K562 (cell line): ENCODE measurements at regions of chr1 and their contacts with region 1.

Region 1: GRCh38 chr1:46724991-46725735 is 6.2 kb upstream of the EFCAB14 start:
- DNase-seq: peak; percentile 56 to 89 (median 66)
- ATAC-seq: peak; percentile 96
- H3K4me3 ChIP-seq: no peak overlapping the region
- H3K27ac ChIP-seq: no peak overlapping the region
- H3K4me1 ChIP-seq: peaks cover 8 to 15% of the 10 kb centered on the region in 2 experiments; a peak in 4 of 5 replicates
- H3K27me3 ChIP-seq: no peaks in the 10 kb centered on the region
- CTCF ChIP-seq: peak; percentile 93 to 96 (median 95)
- EP300 ChIP-seq: no peak
- POLR2A ChIP-seq: no peak
- RAD21 ChIP-seq: peak; percentile 94 to 98

Region 2: GRCh38 chr1:46527474-46528296 is 197.5 kb before region 1 on chr1:
- CTCF ChIA-PET with region 1: interaction called, 10 read pairs
- POLR2A ChIA-PET with region 1: no interaction called
- in situ Hi-C with region 1: no loop called
- intact Hi-C with region 1: no loop called
- DNase-seq: peak; percentile 87 to 94 (median 89)
- ATAC-seq: peak; percentile 87
- H3K4me3 ChIP-seq: no peak overlapping the region
- H3K27ac ChIP-seq: no peak overlapping the region; the same call in 2 of the 3 replicates
- H3K4me1 ChIP-seq: peaks cover 47 to 50% of the 10 kb centered on the region in 2 experiments
- H3K27me3 ChIP-seq: no peaks in the 10 kb centered on the region
- CTCF ChIP-seq: peak; percentile 98 to 99 (median 99)
- EP300 ChIP-seq: peak; percentile 50; the same call in 1 of the 2 replicates
- POLR2A ChIP-seq: no peak
- RAD21 ChIP-seq: peak; percentile 100

Region 3: GRCh38 chr1:46547481-46548383 is 177.4 kb before region 1 on chr1:
- CTCF ChIA-PET with region 1: no interaction called
- POLR2A ChIA-PET with region 1: no interaction called
- in situ Hi-C with region 1: loop called (anchors 5 kb)
- intact Hi-C with region 1: no loop called
- DNase-seq: peak; percentile 48 to 84 (median 52)
- ATAC-seq: peak; percentile 63
- H3K4me3 ChIP-seq: no peak overlapping the region
- H3K27ac ChIP-seq: no peak overlapping the region
- H3K4me1 ChIP-seq: peaks cover 33 to 60% of the 10 kb centered on the region in 2 experiments
- H3K27me3 ChIP-seq: peaks cover 12 to 26% of the 10 kb centered on the region in 2 experiments; a peak in 3 of 5 replicates
- CTCF ChIP-seq: peak; percentile 68 to 83 (median 83)
- EP300 ChIP-seq: no peak
- POLR2A ChIP-seq: no peak
- RAD21 ChIP-seq: peak; percentile 58 to 84

Region 4: GRCh38 chr1:46556822-46557221 is 168.3 kb before region 1 on chr1:
- CTCF ChIA-PET with region 1: interaction called, 4 read pairs
- POLR2A ChIA-PET with region 1: no interaction called
- in situ Hi-C with region 1: no loop called
- intact Hi-C with region 1: loop called (anchors 5 kb)
- DNase-seq: no peak
- ATAC-seq: peak; percentile 53
- H3K4me3 ChIP-seq: no peak overlapping the region
- H3K27ac ChIP-seq: no peak overlapping the region
- H3K4me1 ChIP-seq: peaks cover 6 to 13% of the 10 kb centered on the region in 2 experiments; a peak in 3 of 5 replicates
- H3K27me3 ChIP-seq: peaks cover 2 to 7% of the 10 kb centered on the region in 2 experiments; a peak in 3 of 5 replicates
- CTCF ChIP-seq: peak; percentile 5 to 51 (median 27); a peak in 3 of 6 replicates
- EP300 ChIP-seq: no peak
- POLR2A ChIP-seq: no peak
- RAD21 ChIP-seq: peak in 1 of 2 experiments; percentile 37; a peak in 2 of 4 replicates

Region 5: GRCh38 chr1:46616277-46617107 is 108.7 kb before region 1 on chr1 and contains the start of gene MOB3C:
- CTCF ChIA-PET with region 1: interaction called, 46 read pairs
- POLR2A ChIA-PET with region 1: interaction called, 3 read pairs
- in situ Hi-C with region 1: loop called (anchors 5 kb)
- intact Hi-C with region 1: no loop called
- DNase-seq: peak; percentile 77 to 89 (median 87)
- ATAC-seq: peak; percentile 86
- H3K4me3 ChIP-seq: peak within 1 kb of the TSS; percentile 72
- H3K27ac ChIP-seq: peak within 1 kb of the TSS; percentile 63
- H3K4me1 ChIP-seq: peaks cover 20 to 44% of the 10 kb centered on the region in 2 experiments
- H3K27me3 ChIP-seq: no peaks in the 10 kb centered on the region
- CTCF ChIP-seq: no peak
- EP300 ChIP-seq: no peak
- POLR2A ChIP-seq: peak; percentile 67
- RAD21 ChIP-seq: no peak
- polyA plus RNA-seq, gene MOB3C: 1.0 to 1.1 TPM

Region 6: GRCh38 chr1:46622344-46622743 is 102.8 kb before region 1 on chr1:
- CTCF ChIA-PET with region 1: interaction called, 46 read pairs
- POLR2A ChIA-PET with region 1: interaction called, 3 read pairs
- in situ Hi-C with region 1: loop called (anchors 5 kb)
- intact Hi-C with region 1: loop called (anchors 1 kb)
- DNase-seq: peak; percentile 69 to 76 (median 71)
- ATAC-seq: peak; percentile 83
- H3K4me3 ChIP-seq: no peak overlapping the region
- H3K27ac ChIP-seq: no peak overlapping the region
- H3K4me1 ChIP-seq: peaks cover 9 to 15% of the 10 kb centered on the region in 2 experiments
- H3K27me3 ChIP-seq: no peaks in the 10 kb centered on the region
- CTCF ChIP-seq: peak; percentile 82 to 92 (median 88)
- EP300 ChIP-seq: no peak
- POLR2A ChIP-seq: no peak
- RAD21 ChIP-seq: peak; percentile 78 to 92